ENCODE measurements at regions of chr19 and their contacts with region 1.

Region 1: GRCh38 chr19:7868676-7869452 is 5.3 kb downstream of the PRR36 start:
- DNase-seq: peak; percentile 88

Region 2: DNA sequence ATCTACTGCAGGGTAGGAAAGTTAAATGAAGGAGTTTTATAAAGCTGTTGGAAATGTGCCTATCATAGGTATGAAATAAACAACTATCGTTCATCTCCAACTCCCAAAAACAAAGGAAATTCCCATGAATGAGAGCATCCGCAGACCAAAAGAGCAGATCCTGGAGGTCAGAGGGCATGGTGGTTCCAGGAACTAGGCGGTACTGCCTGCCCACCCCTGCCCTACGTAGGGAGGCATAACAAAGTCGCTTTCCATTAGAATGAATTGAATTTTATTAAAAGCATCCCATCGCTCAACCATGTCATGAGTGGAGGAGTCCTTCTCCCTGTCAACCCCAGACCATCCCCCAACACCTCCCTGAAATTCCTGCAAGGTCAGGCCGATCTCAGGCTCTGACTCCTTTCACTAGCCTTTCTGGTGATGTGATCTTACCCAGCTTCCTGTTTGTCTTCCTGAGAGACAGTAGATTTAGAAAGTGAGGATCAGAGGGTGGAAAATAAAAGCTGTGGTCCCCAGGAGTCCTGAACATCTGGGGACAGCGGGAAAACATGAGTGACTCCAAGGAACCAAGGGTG is 106.1 kb before region 1 on chr19 and contains the start of gene CLEC4M:
- CTCF ChIA-PET with region 1: no interaction called
- POLR2A ChIA-PET with region 1: no interaction called
- DNase-seq: no peak

Region 3: DNA sequence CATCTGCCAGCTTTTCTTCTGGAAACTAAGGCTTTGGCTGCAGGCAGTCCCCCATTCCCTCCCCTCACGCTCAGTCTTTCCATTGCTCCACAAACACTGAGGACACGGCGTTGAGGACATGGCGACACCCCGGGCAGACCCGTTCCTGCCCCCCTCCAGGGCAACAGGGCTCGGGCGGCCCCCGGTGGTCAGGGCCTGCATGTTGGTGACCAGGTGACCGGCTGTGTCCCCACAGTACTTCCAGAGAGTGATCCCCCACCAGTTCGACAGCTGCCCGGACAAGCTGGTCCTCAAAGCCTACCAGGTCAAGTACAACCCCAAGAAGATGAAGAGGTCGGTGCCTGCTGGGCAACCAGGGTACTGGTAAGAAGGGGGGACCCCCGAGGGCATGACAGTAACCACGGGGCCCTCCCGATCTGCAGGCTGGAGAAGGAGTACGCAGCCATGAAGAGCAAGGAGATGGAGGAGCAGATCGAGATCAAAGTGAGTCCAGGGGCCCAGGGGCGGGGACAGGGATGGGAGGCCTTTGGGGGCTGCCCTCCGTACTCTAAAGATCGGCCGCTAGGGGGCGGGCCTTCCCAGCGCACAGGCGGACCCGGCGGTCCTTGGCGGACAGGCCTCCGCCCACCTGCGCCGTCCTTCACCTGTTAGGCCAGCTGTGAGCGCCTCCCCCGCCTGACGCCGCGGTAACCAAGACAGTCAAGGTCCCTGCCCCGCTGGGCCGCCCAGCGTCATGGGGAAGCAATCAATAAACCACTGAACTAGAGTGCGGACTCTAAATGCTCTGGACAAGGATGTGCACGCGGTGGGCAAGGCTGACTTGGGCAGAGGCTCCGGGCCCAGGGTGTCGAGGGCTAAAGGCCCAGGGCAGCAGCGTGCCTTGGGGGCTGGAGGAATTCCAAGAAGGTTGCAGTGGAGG is 15.8 kb before region 1 on chr19:
- CTCF ChIA-PET with region 1: interaction called, 16 read pairs
- POLR2A ChIA-PET with region 1: interaction called, 3 read pairs
- DNase-seq: peak; percentile 90

Region 4: GRCh38 chr19:7858109-7858830 is 10.6 kb before region 1 on chr19:
- CTCF ChIA-PET with region 1: interaction called, 16 read pairs
- POLR2A ChIA-PET with region 1: interaction called, 3 read pairs
- DNase-seq: no peak

Region 5: GRCh38 chr19:7888145-7888825 is 19.4 kb after region 1 on chr19 and contains the start of gene LRRC8E:
- CTCF ChIA-PET with region 1: interaction called, 10 read pairs
- POLR2A ChIA-PET with region 1: interaction called, 14 read pairs
- DNase-seq: peak; percentile 80

Region 6: GRCh38 chr19:7903244-7904073 is 34.6 kb after region 1 on chr19 and contains the start of gene MAP2K7:
- CTCF ChIA-PET with region 1: interaction called, 6 read pairs
- POLR2A ChIA-PET with region 1: interaction called, 15 read pairs
- DNase-seq: peak; percentile 99

Region 7: DNA sequence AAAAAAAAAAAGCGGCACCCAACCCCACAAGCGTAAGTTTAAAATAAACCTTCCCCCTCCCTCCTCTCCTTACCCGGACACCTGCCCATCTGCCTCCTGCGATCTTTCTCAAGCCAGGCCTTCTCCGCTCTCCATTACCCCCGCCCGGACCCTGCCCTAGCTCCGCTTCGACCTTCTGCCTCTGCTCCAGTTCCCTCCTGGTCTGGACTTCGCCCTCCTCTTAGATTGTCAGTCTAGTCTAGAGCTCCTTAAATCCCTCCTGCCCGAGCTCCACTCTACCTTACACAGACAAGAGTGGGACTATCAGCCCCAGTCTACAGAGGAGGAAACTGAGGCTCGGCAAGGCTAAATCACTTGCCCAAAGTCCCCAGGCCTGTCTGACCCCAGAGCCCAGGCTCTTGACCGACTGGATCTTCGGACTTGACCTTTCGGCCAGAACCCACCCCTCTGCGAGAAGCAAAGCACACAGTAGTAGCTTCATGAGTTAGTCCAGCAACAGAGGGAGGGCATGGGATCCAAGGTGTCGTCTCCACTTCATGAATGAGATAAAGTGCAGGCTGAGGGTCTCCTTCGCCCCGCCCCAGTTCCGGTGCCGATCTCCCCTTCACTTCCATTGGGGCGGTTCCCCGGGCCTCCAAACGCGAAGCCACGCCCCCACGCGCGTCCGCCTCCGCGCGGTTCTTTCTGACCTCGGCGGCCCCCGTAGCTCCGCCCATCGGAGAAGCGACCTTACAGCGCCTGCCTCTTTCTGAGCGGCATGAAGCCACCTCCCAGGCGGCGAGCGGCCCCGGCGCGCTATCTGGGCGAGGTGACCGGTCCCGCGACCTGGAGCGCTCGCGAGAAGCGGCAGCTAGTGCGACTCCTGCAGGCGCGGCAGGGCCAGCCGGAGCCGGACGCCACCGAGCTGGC is 51.0 kb after region 1 on chr19 and contains the start of gene SNAPC2:
- CTCF ChIA-PET with region 1: interaction called, 19 read pairs
- POLR2A ChIA-PET with region 1: interaction called, 18 read pairs
- DNase-seq: peak; percentile 85

Region 8: GRCh38 chr19:7943444-7944176 is 74.7 kb after region 1 on chr19 and contains the start of gene TIMM44:
- CTCF ChIA-PET with region 1: interaction called, 7 read pairs
- POLR2A ChIA-PET with region 1: interaction called, 14 read pairs
- DNase-seq: peak; percentile 96

Measured in HEK293T (cell line).